ENCODE measurements at regions of chr17 and their contacts with region 1.

Region 1: DNA sequence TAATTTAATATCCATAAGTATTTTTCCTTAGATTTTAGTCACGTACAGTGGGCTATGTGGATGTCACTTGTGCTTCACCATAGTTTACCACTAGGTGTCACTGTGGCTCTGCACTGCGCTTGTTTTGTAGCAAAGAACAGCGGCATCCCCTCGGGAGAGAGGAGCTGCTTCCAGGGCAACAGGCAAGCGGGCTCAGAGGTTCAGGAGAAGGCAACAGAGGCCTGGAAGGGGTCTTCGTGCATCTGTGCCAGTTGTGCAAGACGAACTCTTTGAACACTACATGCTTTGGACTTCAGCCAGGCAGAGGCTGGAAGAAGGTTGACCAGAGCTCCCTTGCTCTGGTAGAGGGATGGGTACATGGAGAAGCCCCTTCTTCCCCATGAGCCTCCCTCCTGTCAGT is 20.6 kb downstream of the CYB561 start:
- DNase-seq: peak; percentile 82
- ATAC-seq: peak; percentile 93
- H3K4me3 Mint-ChIP-seq: no peak overlapping the region
- H3K27ac Mint-ChIP-seq: no peak overlapping the region
- H3K4me1 Mint-ChIP-seq: peaks cover 27% of the 10 kb centered on the region
- H3K27me3 Mint-ChIP-seq: no peaks in the 10 kb centered on the region

Region 2: GRCh38 chr17:63413128-63413527 is 12.4 kb before region 1 on chr17:
- CTCF ChIA-PET with region 1: interaction called, 29 read pairs
- POLR2A ChIA-PET with region 1: no interaction called
- intact Hi-C with region 1: no loop called
- DNase-seq: no peak
- ATAC-seq: no peak
- H3K4me3 Mint-ChIP-seq: no peak overlapping the region
- H3K27ac Mint-ChIP-seq: no peak overlapping the region
- H3K4me1 Mint-ChIP-seq: no peaks in the 10 kb centered on the region
- H3K27me3 Mint-ChIP-seq: no peaks in the 10 kb centered on the region

Region 3: DNA sequence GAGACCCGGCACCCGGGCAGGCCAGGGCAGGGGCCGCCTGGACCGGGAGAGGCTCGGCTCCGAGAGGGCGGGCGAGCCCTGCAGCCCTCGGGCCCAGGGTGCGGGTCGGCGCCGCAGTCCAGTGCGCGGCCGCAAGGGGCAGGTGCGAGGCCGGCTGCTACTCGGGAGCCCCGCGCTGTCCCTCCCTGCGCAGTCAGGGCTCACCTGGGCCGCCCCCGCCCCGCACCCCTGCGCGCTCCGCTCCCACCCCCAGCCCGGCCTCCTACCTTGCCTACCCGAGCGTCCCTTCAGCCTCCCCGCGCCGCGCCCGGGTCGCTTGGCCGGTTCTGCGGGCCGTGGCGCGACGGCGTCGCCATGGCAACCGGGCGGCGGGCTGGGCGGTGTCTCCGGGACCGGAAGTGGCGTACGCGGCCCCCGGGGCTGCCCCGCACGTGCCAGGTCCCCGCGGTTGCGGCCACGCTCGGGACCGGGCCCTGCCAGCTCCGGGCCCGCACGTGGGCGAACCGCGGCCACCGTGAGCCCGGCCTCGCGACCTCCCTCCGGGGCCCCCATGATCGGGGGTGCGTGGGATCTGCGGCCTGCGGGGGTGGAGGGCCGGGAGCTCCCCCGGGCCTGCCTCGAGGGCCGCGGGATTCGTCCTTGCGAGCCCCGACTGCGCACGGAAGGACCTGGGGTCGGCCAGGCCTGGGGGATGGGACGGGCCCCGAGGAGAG is 20.7 kb after region 1 on chr17 and contains the start of gene CYB561:
- CTCF ChIA-PET with region 1: interaction called, 11 read pairs
- POLR2A ChIA-PET with region 1: no interaction called
- intact Hi-C with region 1: loop called in 1 of 2 experiments (anchors 2 kb)
- DNase-seq: peak; percentile 81
- ATAC-seq: peak; percentile 69
- H3K4me3 Mint-ChIP-seq: peak within 1 kb of the TSS; percentile 60
- H3K27ac Mint-ChIP-seq: peak within 1 kb of the TSS; percentile 72
- H3K4me1 Mint-ChIP-seq: peaks cover 23% of the 10 kb centered on the region
- H3K27me3 Mint-ChIP-seq: peaks cover 3% of the 10 kb centered on the region
- total RNA-seq, gene CYB561: 2.5 to 3.0 TPM

Region 4: DNA sequence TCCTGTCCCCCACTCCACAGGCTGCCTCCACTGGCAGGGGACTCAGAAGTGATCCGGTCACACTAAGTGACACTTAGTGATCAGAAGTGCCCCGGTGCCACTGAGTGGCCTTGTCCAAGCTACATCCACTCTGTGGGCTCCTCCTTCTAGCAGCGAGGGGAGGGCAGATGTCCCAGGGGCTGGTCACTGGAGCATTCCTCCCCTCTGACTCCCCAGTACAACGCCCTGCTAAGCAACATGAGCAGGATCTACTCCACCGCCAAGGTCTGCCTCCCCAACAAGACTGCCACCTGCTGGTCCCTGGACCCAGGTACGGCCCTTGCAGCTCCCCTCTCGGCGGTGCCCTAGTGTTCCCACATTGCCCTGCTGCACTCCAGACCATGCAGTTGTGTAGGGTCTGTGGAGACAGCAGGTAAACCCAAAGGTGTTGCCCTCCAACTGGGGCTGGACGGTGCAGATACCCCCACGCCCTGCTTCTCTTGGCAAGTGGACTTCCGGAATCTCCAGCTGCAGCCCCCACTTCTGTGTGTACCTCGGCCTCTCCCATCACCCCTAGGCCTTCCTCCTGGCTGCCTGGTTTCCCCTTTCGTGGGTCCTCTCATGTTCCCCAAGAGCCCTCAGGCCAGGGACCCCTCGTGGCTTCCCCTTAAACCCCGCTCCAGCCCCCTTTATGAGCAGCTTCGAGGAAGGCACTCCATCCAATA is 53.5 kb after region 1 on chr17:
- CTCF ChIA-PET with region 1: interaction called, 102 read pairs
- POLR2A ChIA-PET with region 1: no interaction called
- intact Hi-C with region 1: loop called (anchors 1 kb)
- DNase-seq: peak; percentile 89
- ATAC-seq: peak; percentile 92
- H3K4me3 Mint-ChIP-seq: no peak overlapping the region
- H3K27ac Mint-ChIP-seq: no peak overlapping the region
- H3K4me1 Mint-ChIP-seq: peaks cover 12% of the 10 kb centered on the region
- H3K27me3 Mint-ChIP-seq: peaks cover 27% of the 10 kb centered on the region

Region 5: DNA sequence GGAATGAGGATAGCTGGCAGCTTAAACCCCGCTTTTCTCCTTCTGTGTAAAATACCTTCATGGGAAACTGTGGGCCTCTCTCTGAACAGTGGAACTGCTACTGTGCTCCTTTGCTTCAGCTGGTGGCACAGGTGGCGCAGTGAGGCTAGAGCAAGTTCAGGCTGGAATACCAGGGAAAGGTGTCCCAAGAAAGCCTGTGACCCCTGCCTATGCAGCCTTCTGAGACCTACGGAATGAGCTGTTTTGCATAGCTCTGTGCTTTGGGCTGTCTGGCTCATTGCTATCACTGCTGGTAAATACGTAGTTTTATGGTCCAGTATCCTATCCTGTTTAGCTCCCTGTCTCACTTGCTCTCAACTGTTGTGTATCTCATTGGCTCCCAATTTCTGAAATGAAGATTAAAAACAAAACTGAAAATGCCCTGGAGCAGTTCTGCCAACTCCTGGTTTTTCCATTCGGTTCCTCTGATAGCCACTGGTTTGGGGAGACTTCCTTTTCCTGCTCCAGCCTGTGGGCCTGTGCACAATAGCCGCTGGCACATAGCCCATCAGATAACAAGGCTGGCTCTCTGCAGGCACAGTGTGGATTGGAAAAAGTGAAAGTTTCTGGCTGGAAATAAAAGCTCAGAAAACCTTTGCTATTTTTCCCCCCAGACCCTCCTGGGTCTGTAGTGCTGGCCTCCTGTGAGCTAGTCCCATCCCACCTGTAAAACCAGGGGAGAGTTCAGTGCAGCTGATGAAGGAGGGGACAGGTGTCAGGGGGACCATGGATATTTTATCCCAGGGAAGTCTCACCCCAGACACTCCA is 250.3 kb after region 1 on chr17:
- CTCF ChIA-PET with region 1: interaction called, 5 read pairs
- POLR2A ChIA-PET with region 1: no interaction called
- intact Hi-C with region 1: loop called in 1 of 2 experiments (anchors 5 kb)
- DNase-seq: no peak
- ATAC-seq: no peak
- H3K4me3 Mint-ChIP-seq: no peak overlapping the region
- H3K27ac Mint-ChIP-seq: no peak overlapping the region
- H3K4me1 Mint-ChIP-seq: peaks cover 7% of the 10 kb centered on the region
- H3K27me3 Mint-ChIP-seq: no peaks in the 10 kb centered on the region

Region 6: GRCh38 chr17:63714547-63715277 is 289.2 kb after region 1 on chr17:
- CTCF ChIA-PET with region 1: interaction called, 18 read pairs
- POLR2A ChIA-PET with region 1: interaction called, 4 read pairs
- intact Hi-C with region 1: loop called in 1 of 2 experiments (anchors 1 kb)
- DNase-seq: no peak
- ATAC-seq: no peak
- H3K4me3 Mint-ChIP-seq: no peak overlapping the region
- H3K27ac Mint-ChIP-seq: no peak overlapping the region
- H3K4me1 Mint-ChIP-seq: peaks cover 8% of the 10 kb centered on the region
- H3K27me3 Mint-ChIP-seq: no peaks in the 10 kb centered on the region